B cell (primary cell): ENCODE measurements at regions of chr22 and their contacts with region 1.

Region 1: DNA sequence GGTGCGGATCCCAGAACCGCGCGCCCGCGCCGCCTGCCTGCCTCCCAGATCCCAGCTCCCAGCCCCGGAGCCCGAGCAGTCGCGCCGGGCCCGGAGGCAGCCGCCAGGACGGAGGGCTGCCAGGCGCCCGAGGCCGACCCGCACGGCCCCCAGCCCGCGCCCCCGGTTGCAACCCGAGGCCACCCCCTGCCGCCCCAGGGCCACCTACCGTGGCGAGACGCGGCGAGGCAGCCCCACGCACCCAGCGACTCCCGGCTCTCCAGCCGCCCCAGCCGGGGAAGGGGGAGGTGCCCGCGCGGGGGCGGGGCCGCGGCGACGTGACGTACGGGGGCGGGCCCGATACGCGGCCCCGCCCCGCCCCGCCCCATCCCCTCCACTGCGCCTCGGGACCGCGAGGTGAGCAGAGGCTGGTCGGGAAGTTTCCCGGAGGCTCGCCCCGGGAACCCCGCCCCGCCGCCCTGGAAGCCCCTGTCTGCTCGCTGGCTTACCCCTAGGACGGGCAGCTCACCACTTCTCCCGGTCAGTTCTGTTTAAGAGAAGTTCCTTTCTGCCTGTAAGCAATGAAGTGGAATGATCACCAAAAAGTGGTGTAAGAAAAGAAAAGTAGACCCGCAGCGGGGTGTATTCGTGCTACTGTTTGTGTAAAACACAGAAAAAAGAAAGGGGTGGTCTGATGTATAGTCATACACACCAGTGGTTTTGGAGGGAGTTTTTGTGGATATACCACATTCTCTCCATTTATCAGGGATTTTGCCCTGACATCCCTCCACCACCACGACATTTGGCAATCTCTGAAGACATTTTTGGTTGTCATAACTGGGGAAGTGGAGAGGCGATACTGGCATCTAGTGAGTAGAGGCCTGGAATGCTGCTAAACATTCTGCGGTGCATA is at the start of gene TPST2:
- DNase-seq: peak; percentile 87
- ATAC-seq: peak; percentile 93
- H3K4me3 ChIP-seq: peak within 1 kb of the TSS; percentile 65 to 93 (median 86)
- H3K4me3 Mint-ChIP-seq: peak within 1 kb of the TSS; percentile 97
- H3K27ac ChIP-seq: peak within 1 kb of the TSS; percentile 53 to 83
- H3K27ac Mint-ChIP-seq: peak within 1 kb of the TSS; percentile 91
- H3K4me1 ChIP-seq: peaks cover 34 to 41% of the 10 kb centered on the region in 2 donors
- H3K4me1 Mint-ChIP-seq: peaks cover 49% of the 10 kb centered on the region
- H3K27me3 ChIP-seq: no peaks in the 10 kb centered on the region
- H3K27me3 Mint-ChIP-seq: no peaks in the 10 kb centered on the region
- CTCF ChIP-seq: no peak
- total RNA-seq, gene TPST2: 16.6 and 17.5 TPM in 2 replicates

Region 2: GRCh38 chr22:26428515-26429457 is 161.3 kb before region 1 on chr22 and contains the start of gene ASPHD2:
- CTCF ChIA-PET with region 1: no interaction called
- POLR2A ChIA-PET with region 1: no interaction called
- intact Hi-C with region 1: loop called (anchors 2 kb)
- DNase-seq: peak; percentile 95
- ATAC-seq: peak; percentile 78
- H3K4me3 ChIP-seq: peak within 1 kb of the TSS; percentile 30 to 100 (median 82)
- H3K4me3 Mint-ChIP-seq: peak within 1 kb of the TSS; percentile 90
- H3K27ac ChIP-seq: peak within 1 kb of the TSS; percentile 88 to 98
- H3K27ac Mint-ChIP-seq: peak within 1 kb of the TSS; percentile 97
- H3K4me1 ChIP-seq: peaks cover 45 to 48% of the 10 kb centered on the region in 2 donors
- H3K4me1 Mint-ChIP-seq: peaks cover 55% of the 10 kb centered on the region
- H3K27me3 ChIP-seq: no peaks in the 10 kb centered on the region
- H3K27me3 Mint-ChIP-seq: no peaks in the 10 kb centered on the region
- CTCF ChIP-seq: no peak
- total RNA-seq, gene ASPHD2: 7.3 and 8.0 TPM in 2 replicates

Region 3: DNA sequence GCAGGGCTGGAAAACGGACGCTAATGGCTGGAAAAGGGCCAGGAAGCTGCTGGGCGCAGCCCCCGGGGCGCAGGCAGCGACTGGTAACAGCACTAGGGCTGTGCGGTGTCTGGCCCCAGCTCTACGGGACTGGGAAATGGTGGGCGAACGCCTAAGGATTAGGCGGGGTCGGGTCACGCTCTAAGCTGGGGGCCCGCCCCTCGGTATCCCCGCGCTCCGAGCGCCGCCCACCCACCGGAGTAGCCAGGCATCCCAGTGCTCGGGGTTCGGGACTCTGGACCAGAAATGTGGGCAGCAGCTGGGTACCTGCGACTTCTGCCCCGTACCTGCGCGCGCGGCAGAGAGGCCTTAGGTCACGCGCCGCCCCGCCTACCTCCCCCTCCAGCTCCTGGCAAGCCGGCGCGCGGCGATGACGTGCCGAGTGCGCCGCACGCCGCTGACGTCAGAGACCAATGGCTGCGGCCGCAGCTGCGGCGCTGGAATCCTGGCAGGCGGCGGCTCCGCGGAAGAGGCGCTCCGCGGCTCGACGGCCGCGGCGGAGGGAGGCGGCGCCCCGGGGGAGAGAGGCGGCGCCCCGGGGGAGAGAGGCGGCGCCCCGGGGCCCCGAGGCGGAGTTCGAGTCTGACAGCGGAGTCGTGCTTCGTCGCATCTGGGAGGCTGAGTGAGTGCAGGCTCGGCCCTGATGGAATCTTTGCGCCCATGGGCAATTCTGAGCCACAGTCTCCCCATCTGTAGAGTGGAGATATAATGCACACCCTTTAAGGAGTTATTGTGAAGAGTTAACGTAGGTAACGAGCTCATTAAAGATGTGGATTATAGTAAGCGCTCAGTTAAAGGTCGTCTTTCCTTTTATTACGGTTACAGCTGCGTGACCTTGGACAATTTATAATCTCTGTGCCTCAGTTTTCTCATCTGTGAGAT is 106.4 kb before region 1 on chr22 and contains the starts of genes HPS4 and SRRD:
- CTCF ChIA-PET with region 1: no interaction called
- POLR2A ChIA-PET with region 1: interaction called, 3 read pairs
- intact Hi-C with region 1: loop called (anchors 1 kb)
- DNase-seq: peak; percentile 97
- ATAC-seq: peak; percentile 83
- H3K4me3 ChIP-seq: peak within 1 kb of the TSS; percentile 70 to 98 (median 83)
- H3K4me3 Mint-ChIP-seq: peak within 1 kb of the TSS; percentile 94
- H3K27ac ChIP-seq: peak within 1 kb of the TSS; percentile 90 to 98
- H3K27ac Mint-ChIP-seq: peak within 1 kb of the TSS; percentile 97
- H3K4me1 ChIP-seq: peaks cover 49 to 58% of the 10 kb centered on the region in 2 donors
- H3K4me1 Mint-ChIP-seq: peaks cover 69% of the 10 kb centered on the region
- H3K27me3 ChIP-seq: no peaks in the 10 kb centered on the region
- H3K27me3 Mint-ChIP-seq: no peaks in the 10 kb centered on the region
- CTCF ChIP-seq: no peak
- total RNA-seq, gene HPS4: 61.8 and 76.6 TPM in 2 replicates
- total RNA-seq, gene SRRD: 19.2 and 19.4 TPM in 2 replicates

Region 4: DNA sequence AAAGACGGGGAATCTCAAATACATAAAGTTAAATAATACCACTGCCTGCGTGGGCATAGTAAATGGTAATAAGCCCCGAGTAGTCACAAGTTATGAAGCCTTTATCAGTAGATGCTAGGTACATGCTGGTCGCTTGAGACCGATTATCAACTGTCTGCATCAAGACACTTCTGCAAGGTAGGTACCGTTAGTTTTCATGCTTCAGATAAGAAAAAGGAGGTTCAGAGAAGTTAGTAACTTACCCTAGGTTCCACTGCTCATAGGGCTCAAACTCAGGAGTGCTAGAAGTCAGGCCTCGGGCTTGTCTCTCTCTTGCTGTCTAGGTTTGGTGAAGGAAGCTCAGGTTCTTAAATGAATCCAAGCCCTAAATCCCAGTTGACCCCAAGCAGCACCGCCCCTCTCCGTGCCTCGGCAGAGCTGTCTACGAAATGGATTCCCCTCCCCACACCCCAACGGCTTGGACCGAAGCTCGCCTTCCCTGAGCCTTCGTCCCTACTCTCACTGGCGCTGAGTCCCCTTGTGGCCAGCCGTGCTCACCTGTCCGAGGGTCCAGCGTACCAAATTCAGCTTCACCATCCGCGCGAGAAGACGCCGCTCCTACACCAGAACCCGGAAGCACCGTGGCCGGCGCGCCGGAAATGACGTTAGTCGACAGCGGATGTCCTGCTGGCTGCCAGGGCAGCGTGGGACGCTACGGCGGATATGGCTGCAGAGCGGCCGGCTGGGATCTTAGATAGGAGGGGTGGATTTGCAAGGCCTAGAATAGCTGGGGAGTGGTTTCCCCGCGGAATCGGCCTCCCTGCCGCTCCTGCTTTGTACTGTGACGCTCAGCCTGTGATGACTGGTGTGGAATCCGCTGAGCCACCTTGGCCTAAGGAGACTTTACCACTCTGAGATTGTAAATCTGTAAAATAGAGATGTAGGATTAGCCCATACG is 78.0 kb before region 1 on chr22 and contains the start of gene TFIP11:
- CTCF ChIA-PET with region 1: no interaction called
- POLR2A ChIA-PET with region 1: no interaction called
- intact Hi-C with region 1: loop called (anchors 1 kb)
- DNase-seq: peak; percentile 91
- ATAC-seq: peak; percentile 95
- H3K4me3 ChIP-seq: peak within 1 kb of the TSS; percentile 72 to 97 (median 81)
- H3K4me3 Mint-ChIP-seq: peak within 1 kb of the TSS; percentile 100
- H3K27ac ChIP-seq: peak within 1 kb of the TSS; percentile 62 to 94
- H3K27ac Mint-ChIP-seq: peak within 1 kb of the TSS; percentile 96
- H3K4me1 ChIP-seq: peaks cover 17 to 21% of the 10 kb centered on the region in 2 donors
- H3K4me1 Mint-ChIP-seq: peaks cover 41% of the 10 kb centered on the region
- H3K27me3 ChIP-seq: no peaks in the 10 kb centered on the region
- H3K27me3 Mint-ChIP-seq: no peaks in the 10 kb centered on the region
- CTCF ChIP-seq: no peak
- total RNA-seq, gene TFIP11: 82.8 and 83.4 TPM in 2 replicates

Region 5: GRCh38 chr22:26534874-26535602 is 55.1 kb before region 1 on chr22:
- CTCF ChIA-PET with region 1: no interaction called
- POLR2A ChIA-PET with region 1: interaction called, 3 read pairs
- intact Hi-C with region 1: loop called (anchors 5 kb)
- DNase-seq: peak; percentile 69
- ATAC-seq: peak; percentile 64
- H3K4me3 ChIP-seq: peak overlapping the region; percentile 7 to 63 (median 30)
- H3K4me3 Mint-ChIP-seq: peak overlapping the region; percentile 73
- H3K27ac ChIP-seq: peak overlapping the region; percentile 81 to 90
- H3K27ac Mint-ChIP-seq: peak overlapping the region; percentile 94
- H3K4me1 ChIP-seq: peaks cover 32 to 44% of the 10 kb centered on the region in 2 donors
- H3K4me1 Mint-ChIP-seq: peaks cover 44% of the 10 kb centered on the region
- H3K27me3 ChIP-seq: no peaks in the 10 kb centered on the region
- H3K27me3 Mint-ChIP-seq: no peaks in the 10 kb centered on the region
- CTCF ChIP-seq: no peak

Region 6: GRCh38 chr22:26579331-26579886 is 10.7 kb before region 1 on chr22:
- CTCF ChIA-PET with region 1: interaction called, 7 read pairs
- POLR2A ChIA-PET with region 1: no interaction called
- intact Hi-C with region 1: loop called (anchors 1 kb)
- DNase-seq: peak; percentile 74
- ATAC-seq: peak; percentile 96
- H3K4me3 ChIP-seq: peak overlapping the region in 4 of 5 experiments; percentile 11 to 53 (median 42)
- H3K4me3 Mint-ChIP-seq: peak overlapping the region; percentile 89
- H3K27ac ChIP-seq: peak overlapping the region; percentile 50 to 83
- H3K27ac Mint-ChIP-seq: peak overlapping the region; percentile 98
- H3K4me1 ChIP-seq: peaks cover 20 to 28% of the 10 kb centered on the region in 2 donors
- H3K4me1 Mint-ChIP-seq: peaks cover 44% of the 10 kb centered on the region
- H3K27me3 ChIP-seq: no peaks in the 10 kb centered on the region
- H3K27me3 Mint-ChIP-seq: no peaks in the 10 kb centered on the region
- CTCF ChIP-seq: no peak

Region 7: GRCh38 chr22:26672590-26673468 is 82.7 kb after region 1 on chr22:
- CTCF ChIA-PET with region 1: no interaction called
- POLR2A ChIA-PET with region 1: no interaction called
- intact Hi-C with region 1: loop called (anchors 1 kb)
- DNase-seq: peak; percentile 94
- ATAC-seq: peak; percentile 70
- H3K4me3 ChIP-seq: peak overlapping the region; percentile 75 to 94 (median 89)
- H3K4me3 Mint-ChIP-seq: peak overlapping the region; percentile 98
- H3K27ac ChIP-seq: peak overlapping the region; percentile 93 to 97
- H3K27ac Mint-ChIP-seq: peak overlapping the region; percentile 99
- H3K4me1 ChIP-seq: peaks cover 59 to 88% of the 10 kb centered on the region in 2 donors
- H3K4me1 Mint-ChIP-seq: peaks cover 87% of the 10 kb centered on the region
- H3K27me3 ChIP-seq: no peaks in the 10 kb centered on the region
- H3K27me3 Mint-ChIP-seq: no peaks in the 10 kb centered on the region
- CTCF ChIP-seq: peak; percentile 14